ENCODE measurements at regions of chr9 and their contacts with region 1.

Region 1: DNA sequence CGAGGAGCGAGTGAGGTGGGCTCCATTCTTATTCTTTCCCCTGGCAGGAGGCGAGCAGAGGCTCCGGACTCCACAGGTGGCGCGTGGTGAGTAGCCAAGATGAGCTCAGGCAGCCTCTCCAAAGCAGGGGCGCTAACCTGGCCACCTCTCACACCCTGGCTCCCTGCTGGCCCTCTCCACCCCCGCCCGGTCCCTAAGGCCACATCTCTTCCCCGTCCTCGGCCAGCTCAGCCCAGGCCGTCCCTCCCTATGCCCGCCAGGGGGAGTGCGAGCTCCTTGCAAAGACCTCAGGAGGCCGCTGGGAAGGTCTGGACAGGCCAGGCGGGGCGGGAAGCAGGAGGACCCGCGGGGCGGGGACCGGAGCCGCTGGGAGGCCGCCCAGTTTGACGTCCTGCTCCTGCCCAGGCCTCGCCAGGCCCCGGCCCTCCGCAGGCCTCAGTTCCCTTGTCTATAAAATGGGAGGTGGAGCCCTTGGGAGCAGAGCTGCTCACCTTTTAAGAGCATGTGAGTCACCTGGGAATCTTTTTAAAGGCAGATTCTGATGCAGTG is 46.3 kb upstream of the GGTA1 start:
- DNase-seq: peak; percentile 88 to 97 (median 92)
- H3K4me3 ChIP-seq: peak overlapping the region in 56 of 59 donors; percentile 7 to 60 (median 45)
- H3K27ac ChIP-seq: peak overlapping the region in 5 of 59 donors; percentile 3 to 60 (median 51)
- H3K27me3 ChIP-seq: no peaks in the 10 kb centered on the region
- CTCF ChIP-seq: peak; percentile 37 to 98 (median 96)

Region 2: DNA sequence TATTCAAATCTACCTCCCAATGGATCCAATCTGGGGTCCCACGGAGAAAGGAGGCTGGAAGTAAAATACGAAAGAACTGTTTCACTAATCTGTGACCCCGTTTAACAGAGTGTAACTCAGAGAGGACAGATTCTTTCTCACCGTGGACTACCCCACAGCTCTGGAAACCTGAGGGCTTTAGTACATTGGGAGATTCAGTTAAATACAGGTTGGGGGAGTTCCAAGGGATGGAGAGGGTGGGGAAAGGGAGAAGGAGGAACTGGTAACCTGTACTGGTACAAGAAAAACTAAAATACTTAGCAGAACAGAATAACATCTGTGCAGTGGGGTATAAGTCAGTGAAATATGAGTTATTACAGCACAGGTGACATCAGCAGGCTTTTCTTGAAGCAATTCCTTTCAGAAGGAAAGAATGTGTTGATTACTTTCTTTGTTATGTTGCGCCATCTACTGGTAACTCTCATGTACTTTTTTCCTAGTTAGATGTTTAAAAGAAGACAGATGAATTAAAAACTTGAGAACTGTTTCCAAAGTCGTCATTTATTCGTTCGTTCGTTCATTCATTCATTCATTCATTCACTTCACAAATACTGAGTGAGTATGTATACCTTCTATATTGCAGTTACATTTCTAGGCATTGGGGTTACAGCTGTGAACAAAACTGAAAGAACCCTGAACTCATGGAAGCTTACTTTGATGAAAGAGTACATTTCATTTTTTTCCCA is 145.9 kb before region 1 on chr9:
- intact Hi-C with region 1: no loop called
- DNase-seq: no peak
- H3K4me3 ChIP-seq: no peak overlapping the region
- H3K27ac ChIP-seq: no peak overlapping the region
- H3K27me3 ChIP-seq: no peaks in the 10 kb centered on the region
- CTCF ChIP-seq: peak; percentile 72 to 94 (median 82)

Region 3: DNA sequence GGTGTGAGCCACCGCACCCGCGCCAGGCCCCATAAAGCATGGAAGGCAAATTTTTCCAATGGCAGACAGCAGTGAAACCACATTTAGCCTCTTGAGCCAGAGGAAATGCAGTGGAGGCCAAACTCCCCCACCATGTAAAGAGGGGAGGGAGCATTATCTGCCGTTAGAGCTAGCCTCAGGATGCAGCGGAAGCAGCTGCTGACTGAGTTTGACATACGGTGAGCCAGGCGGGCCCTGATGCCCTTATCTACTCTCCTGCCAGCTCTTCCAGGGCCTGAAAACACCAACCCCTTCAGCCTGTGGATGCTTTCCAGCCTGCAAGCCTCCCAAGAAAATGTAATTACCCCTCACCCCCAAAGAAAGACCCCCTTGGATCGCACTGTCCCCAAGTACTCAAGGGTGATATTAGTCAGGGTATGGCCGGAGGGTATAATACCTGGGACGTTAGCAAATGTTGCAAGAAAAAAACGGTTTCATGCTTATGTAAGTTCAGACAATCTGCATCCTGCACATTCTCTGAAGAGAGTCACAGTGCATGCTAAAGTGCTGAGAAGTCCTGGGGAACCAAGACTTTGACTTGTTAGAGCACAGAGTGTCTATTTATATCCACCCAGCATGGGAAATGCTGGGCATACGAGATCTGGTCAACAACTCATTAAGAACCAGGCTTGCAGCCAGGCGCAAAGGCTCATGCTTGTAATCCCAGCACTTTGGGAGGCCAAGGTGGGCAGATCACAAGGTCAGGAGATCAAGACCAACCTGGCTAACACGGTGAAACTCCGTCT is 35.0 kb before region 1 on chr9:
- intact Hi-C with region 1: no loop called
- DNase-seq: peak in 1 of 10 donors; percentile 2
- H3K4me3 ChIP-seq: no peak overlapping the region
- H3K27ac ChIP-seq: peak overlapping the region in 20 of 59 donors; percentile 11 to 76 (median 50)
- H3K27me3 ChIP-seq: no peaks in the 10 kb centered on the region
- CTCF ChIP-seq: no peak

Region 4: DNA sequence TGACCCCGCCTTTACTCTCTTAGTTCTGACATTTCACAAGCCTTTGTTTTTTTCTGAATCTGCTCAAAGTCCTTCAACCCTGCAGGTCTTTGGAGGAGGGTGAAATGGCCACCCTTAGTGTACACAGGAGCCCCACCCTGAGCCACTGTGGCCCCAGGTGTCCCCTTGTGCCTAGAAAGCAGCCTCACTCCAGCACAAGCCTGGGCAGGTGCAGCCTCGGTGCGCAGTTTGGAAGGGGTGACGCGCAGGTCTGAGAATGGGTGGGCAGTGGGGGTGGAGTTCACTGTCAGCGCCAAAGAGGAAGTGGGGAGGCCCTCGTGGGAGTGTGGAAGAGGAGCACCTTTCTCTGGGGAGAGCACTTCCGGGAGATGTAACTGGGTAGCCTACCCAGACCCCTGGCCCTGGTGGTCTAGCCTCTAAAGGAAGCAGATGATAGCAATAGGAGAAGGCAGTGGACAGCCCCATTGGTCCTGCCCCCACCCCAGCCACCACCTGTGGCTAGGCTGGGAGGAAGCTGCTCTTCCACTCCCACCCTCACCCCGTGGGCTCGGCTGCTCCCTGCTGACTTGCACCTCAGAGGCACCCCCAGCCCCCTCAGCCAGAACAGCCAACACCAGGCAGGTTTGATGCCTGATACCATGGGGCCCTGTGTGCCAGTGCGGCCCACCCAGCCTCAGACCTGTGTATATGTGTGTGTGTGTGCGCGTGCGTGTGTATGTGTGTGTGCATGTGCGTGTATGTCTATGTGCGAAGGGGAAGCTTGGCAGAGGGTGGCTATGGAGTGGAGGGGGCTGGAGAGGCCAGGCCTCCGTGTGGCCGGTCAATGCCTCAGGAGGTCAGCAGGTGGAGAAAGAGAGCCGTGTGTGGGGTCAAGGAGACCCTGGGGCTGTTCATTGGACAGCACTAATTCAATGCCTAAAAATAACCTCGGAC is 88.6 kb after region 1 on chr9:
- intact Hi-C with region 1: loop called in 1 of 2 experiments (anchors 5 kb)
- DNase-seq: peak in 2 of 10 donors; percentile 38 to 55
- H3K4me3 ChIP-seq: no peak overlapping the region
- H3K27ac ChIP-seq: peak overlapping the region in 20 of 59 donors; percentile 8 to 97 (median 90)
- H3K27me3 ChIP-seq: no peaks in the 10 kb centered on the region
- CTCF ChIP-seq: peak in 54 of 56 donors; percentile 33 to 77 (median 62)

Region 5: GRCh38 chr9:121650217-121651007 is 104.5 kb after region 1 on chr9:
- intact Hi-C with region 1: no loop called
- DNase-seq: peak in 1 of 10 donors; percentile 49
- H3K4me3 ChIP-seq: peak overlapping the region in 26 of 59 donors; percentile 53 to 83 (median 70)
- H3K27ac ChIP-seq: peak overlapping the region in 49 of 59 donors; percentile 2 to 87 (median 56)
- H3K27me3 ChIP-seq: no peaks in the 10 kb centered on the region
- CTCF ChIP-seq: no peak

Region 6: GRCh38 chr9:121992571-121993212 is 446.7 kb after region 1 on chr9:
- intact Hi-C with region 1: loop called (anchors 5 kb)
- DNase-seq: peak in 7 of 10 donors; percentile 53 to 77 (median 70)
- H3K4me3 ChIP-seq: no peak overlapping the region
- H3K27ac ChIP-seq: peak overlapping the region in 13 of 59 donors; percentile 2 to 58 (median 26)
- H3K27me3 ChIP-seq: no peaks in the 10 kb centered on the region
- CTCF ChIP-seq: peak; percentile 79 to 97 (median 91)

Region 7: GRCh38 chr9:122099271-122099869 is 553.4 kb after region 1 on chr9:
- intact Hi-C with region 1: loop called in 1 of 2 experiments (anchors 5 kb)
- DNase-seq: peak; percentile 81 to 90 (median 84)
- H3K4me3 ChIP-seq: peak overlapping the region in 29 of 59 donors; percentile 0 to 50 (median 31)
- H3K27ac ChIP-seq: peak overlapping the region in 3 of 59 donors; percentile 36 to 65 (median 49)
- H3K27me3 ChIP-seq: no peaks in the 10 kb centered on the region
- CTCF ChIP-seq: peak; percentile 82 to 99 (median 94)

Region 8: DNA sequence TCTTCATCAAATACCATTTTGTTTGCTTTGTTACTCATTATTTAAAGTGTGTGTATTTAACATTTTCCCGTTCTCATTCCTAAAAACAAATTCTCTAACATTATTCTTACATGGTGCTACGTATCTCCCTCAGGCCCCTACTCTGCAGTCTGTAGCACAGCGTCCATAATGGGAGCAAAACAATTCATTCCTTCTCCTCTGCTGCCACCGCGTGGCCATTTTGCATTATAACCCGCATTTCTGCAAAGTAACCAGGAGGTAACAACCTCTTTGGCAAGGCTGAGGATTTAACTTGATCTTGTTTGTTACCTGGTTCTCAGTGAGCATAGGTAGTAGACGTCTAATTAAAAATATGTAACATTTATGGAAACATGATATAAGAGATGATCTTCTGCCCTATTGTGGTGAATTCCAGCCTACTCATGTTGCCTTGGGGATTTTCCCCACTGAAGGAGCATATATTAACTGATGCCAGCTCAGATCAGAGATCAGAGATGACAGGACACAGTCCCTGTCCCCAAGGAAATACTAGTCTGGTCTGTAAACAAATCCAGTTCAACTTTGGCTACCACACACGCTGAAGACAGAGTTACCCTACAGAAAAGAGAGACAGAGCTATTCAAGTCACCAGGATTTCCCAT is 1264.5 kb after region 1 on chr9:
- intact Hi-C with region 1: loop called in 1 of 2 experiments (anchors 5 kb)
- DNase-seq: peak; percentile 63 to 88 (median 76)
- H3K4me3 ChIP-seq: peak overlapping the region in 1 of 59 donors; percentile 21
- H3K27ac ChIP-seq: peak overlapping the region in 1 of 59 donors; percentile 31
- H3K27me3 ChIP-seq: no peaks in the 10 kb centered on the region
- CTCF ChIP-seq: peak; percentile 76 to 97 (median 88)